Activated CD4-positive, alpha-beta T cell treated with anti-CD3 and anti-CD28 coated beads, Interleukin-2, amount 10 ng/mL, durations not matched to agents 24 days and 14 days (primary cell): ENCODE measurements at regions of chr10 and their contacts with region 1.

Region 1: DNA sequence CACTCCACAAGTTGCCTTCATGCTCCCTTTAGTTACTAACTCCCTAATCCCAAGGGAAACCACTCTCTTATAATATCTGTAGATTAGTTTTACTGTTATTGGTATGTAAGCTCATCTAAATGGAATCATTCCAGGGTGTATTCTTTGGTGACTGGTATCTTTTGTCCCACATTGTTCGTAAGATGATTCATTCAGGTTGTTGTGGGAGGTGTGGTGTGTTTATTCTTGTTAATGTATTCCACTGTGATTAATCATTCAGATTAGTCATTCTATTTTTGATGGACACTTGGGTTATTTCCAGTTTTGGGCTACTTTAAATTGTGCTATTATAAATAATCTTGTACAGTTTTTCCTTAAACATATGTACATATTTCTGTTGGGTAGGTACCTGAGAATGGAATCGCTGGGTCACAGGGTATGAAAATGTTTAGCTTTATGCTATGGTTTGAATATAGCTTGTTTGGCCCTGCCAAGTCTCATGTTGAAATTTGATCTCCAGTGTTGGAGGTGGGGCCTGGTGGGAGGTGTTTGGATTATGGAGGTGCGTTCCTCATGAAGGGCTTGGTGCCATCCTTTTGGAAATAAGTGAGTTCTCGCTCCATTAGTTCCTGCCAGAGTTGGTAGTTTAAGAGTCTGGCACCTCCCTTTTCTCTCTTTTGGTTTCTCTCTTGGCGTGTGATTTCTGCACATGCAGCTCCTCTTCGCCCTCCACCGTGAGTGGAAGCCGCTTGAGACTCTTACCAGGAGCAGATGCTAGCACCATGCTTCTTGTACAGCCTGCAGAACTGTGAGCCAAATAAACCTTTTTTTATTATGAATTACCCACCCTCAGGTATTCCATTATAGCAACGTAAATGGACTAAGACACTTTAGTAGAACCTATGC is 13.8 kb downstream of the BTRC start:
- DNase-seq: peak; percentile 65
- H3K4me3 Mint-ChIP-seq: no peak overlapping the region
- H3K27ac Mint-ChIP-seq: peak overlapping the region; percentile 70
- H3K4me1 Mint-ChIP-seq: peaks cover 12% of the 10 kb centered on the region
- H3K27me3 Mint-ChIP-seq: no peaks in the 10 kb centered on the region

Region 2: DNA sequence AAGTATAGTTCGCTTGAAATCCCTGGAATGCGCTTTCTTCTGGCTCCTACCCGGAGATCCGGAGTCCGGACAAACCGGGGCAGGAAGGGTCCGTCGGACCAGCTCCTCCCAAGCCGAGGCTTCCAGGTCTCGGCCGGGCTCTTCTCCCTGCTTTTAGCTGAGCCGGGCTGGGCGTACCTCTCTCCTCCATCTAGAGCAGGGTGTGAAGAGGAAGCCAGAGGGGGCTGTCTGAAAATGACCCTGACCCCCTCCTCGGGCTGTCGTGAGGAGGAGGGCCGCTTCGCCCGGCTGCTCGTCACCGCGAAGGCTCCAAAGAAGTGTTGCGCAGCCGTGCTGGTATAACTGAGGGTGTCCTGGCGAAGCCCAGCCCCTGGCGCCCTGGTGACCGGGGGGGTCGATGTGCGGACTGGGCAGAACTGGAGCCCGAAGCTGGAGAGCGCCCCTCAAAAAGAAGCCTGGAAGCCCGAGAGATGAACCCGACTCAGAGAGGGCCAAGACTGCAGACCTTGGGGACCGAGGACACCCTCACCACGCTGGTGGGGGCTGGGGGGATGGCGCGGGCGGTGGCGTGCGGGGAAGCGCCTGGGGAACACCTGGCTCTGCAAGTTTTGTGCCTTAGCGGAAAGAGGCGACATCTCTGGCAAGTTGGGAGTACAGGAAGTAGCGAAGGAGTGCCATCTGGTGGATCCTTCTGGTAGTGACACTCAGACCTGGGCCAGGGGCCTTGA is 300.3 kb before region 1 on chr10:
- intact Hi-C with region 1: no loop called
- DNase-seq: peak; percentile 94
- H3K4me3 Mint-ChIP-seq: peak overlapping the region; percentile 88
- H3K27ac Mint-ChIP-seq: no peak overlapping the region
- H3K4me1 Mint-ChIP-seq: peaks cover 20% of the 10 kb centered on the region
- H3K27me3 Mint-ChIP-seq: peaks cover 57% of the 10 kb centered on the region

Region 3: GRCh38 chr10:101380353-101381017 is 12.7 kb after region 1 on chr10:
- intact Hi-C with region 1: loop called (anchors 1 kb)
- DNase-seq: no peak
- H3K4me3 Mint-ChIP-seq: no peak overlapping the region
- H3K27ac Mint-ChIP-seq: peak overlapping the region; percentile 34
- H3K4me1 Mint-ChIP-seq: peaks cover 11% of the 10 kb centered on the region
- H3K27me3 Mint-ChIP-seq: no peaks in the 10 kb centered on the region

Region 4: DNA sequence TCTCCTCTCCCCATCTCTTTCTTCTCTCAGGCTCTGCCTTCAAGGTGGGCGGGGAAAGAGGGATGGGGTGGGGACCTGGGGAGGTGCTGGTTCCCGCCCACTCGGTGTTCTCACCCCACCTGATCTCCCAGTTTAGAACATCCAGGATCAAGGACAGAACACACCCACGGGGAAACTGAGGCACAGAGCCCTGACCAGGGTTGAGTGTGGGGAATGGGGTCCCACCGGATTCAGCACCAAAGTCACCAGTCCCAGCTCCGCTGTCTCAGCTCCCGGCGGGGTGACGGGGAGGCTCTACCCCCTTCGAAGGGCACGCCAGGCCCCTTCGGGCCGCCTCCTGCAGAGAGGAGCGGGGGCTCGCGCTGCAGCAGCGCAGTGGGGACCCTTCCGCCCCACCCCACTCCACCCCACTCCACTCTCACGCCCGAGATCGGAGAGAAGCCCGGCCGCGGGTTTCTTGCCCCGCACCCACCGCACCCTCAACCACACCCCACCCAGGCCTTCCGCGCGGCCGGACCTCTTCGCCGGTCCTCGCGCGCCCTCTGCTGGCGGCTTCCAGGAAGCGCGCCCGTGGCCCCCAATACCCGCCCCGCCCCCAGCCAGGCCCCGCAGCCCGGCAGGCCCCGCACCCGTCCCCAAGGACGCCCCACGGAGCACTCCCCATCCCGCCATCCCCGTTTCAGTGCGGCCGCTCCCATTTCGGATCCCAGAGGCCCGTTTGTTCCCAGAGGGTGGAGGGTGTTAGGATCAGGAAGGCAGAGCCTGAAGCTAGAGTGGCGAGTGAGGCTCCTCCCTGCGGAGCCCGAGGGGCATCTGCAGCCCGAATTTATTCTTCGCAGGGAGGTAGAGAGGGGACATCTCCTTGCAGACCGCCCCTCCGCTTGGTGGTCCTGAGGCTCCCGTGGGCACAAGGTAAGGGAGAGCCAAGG is 202.3 kb after region 1 on chr10:
- intact Hi-C with region 1: no loop called
- DNase-seq: peak; percentile 93
- H3K4me3 Mint-ChIP-seq: peak overlapping the region; percentile 79
- H3K27ac Mint-ChIP-seq: peak overlapping the region; percentile 56
- H3K4me1 Mint-ChIP-seq: peaks cover 17% of the 10 kb centered on the region
- H3K27me3 Mint-ChIP-seq: peaks cover 43% of the 10 kb centered on the region

Region 5: DNA sequence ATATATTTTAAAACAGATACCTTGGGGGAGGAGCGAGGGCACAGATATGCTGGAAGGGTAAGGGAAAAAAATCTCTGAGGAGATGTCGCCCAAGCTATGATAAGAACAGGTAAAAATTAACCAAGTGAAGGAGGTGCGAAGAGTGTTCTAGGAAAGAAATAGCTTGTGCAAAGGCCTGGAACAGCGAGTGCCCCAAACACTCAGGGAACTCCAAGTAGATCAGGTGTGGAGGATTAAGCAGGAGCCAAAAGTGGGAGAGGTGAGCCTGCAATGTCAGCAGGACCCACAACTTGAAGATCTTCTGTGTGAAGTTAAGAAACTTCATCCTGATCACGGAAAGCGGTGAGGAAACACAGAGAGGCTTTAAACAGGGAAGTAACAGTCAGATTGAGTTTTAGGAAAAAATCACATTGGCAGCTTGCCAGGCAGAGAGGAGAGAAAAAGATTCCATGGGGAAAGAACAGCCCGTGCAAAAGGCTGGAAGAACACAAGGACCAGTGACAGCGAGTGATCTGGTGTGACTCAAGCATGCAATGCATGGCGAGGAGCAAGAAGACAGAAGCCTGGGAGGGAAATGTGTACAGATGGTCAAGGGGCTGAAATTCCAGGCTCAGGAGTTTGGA is 377.4 kb after region 1 on chr10:
- intact Hi-C with region 1: no loop called
- DNase-seq: no peak
- H3K4me3 Mint-ChIP-seq: no peak overlapping the region
- H3K27ac Mint-ChIP-seq: no peak overlapping the region
- H3K4me1 Mint-ChIP-seq: no peaks in the 10 kb centered on the region
- H3K27me3 Mint-ChIP-seq: peaks cover 19% of the 10 kb centered on the region